Gastrocnemius medialis (tissue), 4 donors: ENCODE measurements at regions of chr3 and their contacts with region 1.

Region 1: DNA sequence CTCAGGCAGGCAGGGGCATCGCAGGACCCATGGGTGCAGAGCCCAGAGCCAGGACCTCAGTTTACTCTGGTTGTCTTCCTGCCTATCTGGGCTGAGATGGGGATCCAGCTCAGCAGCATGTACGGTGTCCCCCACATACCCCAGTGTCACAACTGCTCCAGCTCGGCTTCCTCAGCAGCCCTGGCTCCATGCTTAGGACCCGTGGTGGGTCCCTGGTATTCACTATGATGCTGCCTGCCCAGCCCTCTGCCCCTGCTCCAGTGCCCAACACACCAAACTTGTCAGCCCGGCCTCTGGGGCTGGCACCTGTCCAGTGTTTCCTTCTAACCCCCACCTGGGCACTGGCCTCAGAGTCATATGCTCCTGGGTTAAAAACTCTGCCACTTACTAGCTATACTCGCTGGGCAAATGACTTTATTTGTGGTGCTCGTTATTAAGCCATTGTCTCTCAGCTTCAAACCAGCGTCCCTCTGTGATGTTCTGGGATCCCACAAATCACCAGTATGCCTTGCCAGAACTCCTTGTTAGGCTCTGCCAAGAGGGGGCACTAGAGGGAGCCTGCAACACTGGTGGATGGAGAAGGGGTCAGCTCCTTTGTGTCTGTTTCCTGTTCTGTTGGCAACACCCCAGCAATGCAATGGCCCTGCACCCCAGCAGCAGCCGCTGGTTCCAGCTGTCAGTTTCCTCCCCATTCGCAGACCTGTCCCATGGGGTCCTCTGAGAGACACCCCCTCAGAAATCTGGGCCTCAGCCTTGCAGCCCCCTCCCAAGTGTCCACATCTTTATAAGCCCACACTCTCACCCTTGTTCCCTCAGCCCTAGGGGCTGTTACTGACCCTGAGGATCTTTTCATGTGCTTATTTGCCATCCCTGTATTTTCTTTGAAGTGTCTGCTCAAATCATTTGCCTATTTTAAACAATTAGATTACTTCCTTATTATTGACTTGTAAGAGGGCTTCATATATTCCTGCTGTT is 24.1 kb upstream of the MRPS22 start:
- DNase-seq: no peak
- ATAC-seq: no peak
- H3K4me3 ChIP-seq: no peak overlapping the region
- H3K27ac ChIP-seq: no peak overlapping the region
- H3K4me1 ChIP-seq: no peaks in the 10 kb centered on the region
- H3K27me3 ChIP-seq: no peaks in the 10 kb centered on the region
- CTCF ChIP-seq: no peak
- POLR2A ChIP-seq: no peak

Region 2: DNA sequence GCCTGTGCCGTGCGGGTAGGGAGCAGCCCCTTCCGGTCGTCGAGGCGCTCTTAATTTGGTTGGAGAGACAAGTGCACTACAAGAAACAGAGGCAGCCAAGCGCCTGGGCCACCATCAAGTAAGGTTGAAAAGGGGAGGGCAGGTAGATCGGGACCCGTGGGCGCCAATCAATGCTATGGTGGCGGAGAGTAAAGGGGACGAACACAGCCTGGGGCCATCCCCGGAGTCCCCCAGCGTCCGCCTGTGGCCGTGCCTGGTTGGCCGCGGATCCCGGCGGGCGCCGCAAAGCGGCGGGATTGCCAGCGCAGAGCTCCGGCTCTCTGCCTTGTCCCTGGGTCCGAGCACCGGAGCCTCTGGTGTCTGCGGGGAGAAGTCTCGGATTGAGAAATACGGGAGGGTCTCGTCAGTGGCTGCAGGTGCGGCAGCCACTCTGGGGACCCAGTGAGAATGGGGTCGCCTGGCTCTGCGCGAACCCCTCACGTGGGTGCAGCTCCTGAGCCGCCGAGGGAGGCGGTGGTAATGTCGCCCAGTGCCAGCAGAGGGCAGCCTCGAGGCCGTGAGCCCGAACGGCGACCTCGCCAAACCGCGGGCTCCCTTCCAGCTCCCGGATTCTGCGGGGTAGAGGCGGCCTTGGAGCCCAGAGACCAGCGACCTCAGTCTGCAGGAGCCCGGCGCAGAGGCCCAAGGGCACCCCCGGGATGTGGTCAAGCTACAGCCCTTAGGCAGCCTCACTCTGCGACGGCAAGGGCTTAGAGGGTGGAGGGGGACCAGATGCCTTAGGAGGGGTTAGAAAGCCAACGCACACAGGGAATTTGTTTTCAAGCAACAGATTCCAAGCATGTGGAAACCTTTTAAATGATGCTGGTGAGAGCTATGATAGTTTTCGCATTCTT is 383.6 kb before region 1 on chr3:
- in situ Hi-C with region 1: loop called in 1 of 4 experiments (anchors 25 kb)
- intact Hi-C with region 1: no loop called
- DNase-seq: peak; percentile 34 to 55
- ATAC-seq: peak; percentile 67 to 68
- H3K4me3 ChIP-seq: peak overlapping the region; percentile 32 to 70 (median 44)
- H3K27ac ChIP-seq: no peak overlapping the region
- H3K4me1 ChIP-seq: peaks cover 28 to 34% of the 10 kb centered on the region in 2 donors
- H3K27me3 ChIP-seq: peaks cover 50 to 56% (median 51%) of the 10 kb centered on the region in 3 donors
- CTCF ChIP-seq: peak; percentile 59 to 95 (median 88)
- POLR2A ChIP-seq: no peak

Region 3: DNA sequence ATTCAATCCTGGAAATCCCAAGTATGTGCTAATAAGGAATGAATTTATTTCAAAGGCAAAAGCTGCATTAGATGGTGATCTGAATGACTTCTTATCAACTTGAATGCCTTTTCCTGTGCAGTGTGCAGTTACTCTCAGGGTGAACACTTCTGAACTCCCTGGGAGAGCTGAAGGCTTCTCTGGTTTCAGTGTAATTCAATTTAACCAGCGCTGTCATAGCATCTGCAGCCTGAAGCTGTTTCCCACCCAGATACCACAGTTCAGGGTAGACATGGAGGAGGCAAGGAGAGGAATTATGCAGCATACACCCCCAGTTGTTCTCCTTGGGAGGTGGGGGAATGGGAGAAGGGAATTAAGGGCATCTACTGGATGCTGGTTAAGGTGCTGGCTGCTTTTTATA is 225.9 kb before region 1 on chr3:
- in situ Hi-C with region 1: no loop called
- intact Hi-C with region 1: no loop called
- DNase-seq: no peak
- ATAC-seq: no peak
- H3K4me3 ChIP-seq: no peak overlapping the region
- H3K27ac ChIP-seq: no peak overlapping the region
- H3K4me1 ChIP-seq: no peaks in the 10 kb centered on the region
- H3K27me3 ChIP-seq: no peaks in the 10 kb centered on the region
- CTCF ChIP-seq: no peak
- POLR2A ChIP-seq: no peak

Region 4: GRCh38 chr3:139111392-139112229 is 208.1 kb before region 1 on chr3:
- in situ Hi-C with region 1: loop called in 3 of 4 experiments (anchors 10 to 25 kb)
- intact Hi-C with region 1: no loop called
- DNase-seq: peak; percentile 15 to 25
- ATAC-seq: peak in 1 of 2 donors; percentile 60
- H3K4me3 ChIP-seq: no peak overlapping the region
- H3K27ac ChIP-seq: no peak overlapping the region
- H3K4me1 ChIP-seq: no peaks in the 10 kb centered on the region
- H3K27me3 ChIP-seq: no peaks in the 10 kb centered on the region
- CTCF ChIP-seq: peak; percentile 38 to 73 (median 63)
- POLR2A ChIP-seq: no peak

Region 5: DNA sequence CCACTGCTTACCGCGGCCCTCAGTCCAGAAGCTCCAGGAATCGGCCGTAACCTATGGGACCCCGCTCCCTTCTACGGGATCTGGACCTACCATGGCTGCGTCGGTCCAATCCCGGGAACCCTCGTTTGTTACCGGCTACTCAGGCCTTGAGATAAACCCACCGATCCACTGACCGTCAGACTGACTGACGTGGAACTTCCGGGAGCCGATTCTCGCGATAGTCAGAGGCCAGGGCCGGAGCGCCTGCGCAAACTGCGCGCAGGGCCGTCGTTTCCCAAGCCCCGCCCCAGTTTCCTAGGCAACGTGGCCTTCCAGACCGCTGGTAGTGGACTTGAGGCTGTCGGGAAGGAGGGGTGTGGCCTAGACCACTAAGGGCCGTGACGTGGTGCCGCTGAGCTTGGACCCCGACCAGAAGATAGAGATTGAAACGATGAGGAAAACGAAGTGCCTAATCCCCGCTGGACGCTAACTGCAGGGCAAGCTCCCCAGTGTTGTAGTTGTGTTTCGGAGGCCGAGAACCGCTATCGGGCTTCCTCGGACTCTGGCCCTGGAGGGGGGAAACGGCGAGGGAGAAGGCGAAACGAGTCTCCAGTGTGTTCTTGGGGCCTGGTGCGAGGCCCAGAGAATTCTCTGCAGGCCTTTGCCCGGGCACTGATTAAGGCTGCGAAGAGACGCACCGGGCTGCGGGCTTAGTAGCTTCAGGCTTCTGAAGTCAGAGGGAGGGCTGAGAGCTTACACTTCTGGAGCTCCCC is 69.9 kb after region 1 on chr3 and contains the start of gene COPB2:
- in situ Hi-C with region 1: no loop called
- intact Hi-C with region 1: no loop called
- DNase-seq: peak; percentile 99
- ATAC-seq: peak; percentile 98 to 99
- H3K4me3 ChIP-seq: peak within 1 kb of the TSS; percentile 89 to 97 (median 92)
- H3K27ac ChIP-seq: peak within 1 kb of the TSS; percentile 89 to 94 (median 91)
- H3K4me1 ChIP-seq: peaks cover 50 to 57% of the 10 kb centered on the region in 2 donors
- H3K27me3 ChIP-seq: no peaks in the 10 kb centered on the region
- CTCF ChIP-seq: no peak
- POLR2A ChIP-seq: peak; percentile 76 to 83
- total RNA-seq, gene COPB2: 38.9 to 43.4 (median 42.1) TPM